CD8-positive, alpha-beta memory T cell (primary cell): ENCODE measurements at regions of chr17 and their contacts with region 1.

Region 1: DNA sequence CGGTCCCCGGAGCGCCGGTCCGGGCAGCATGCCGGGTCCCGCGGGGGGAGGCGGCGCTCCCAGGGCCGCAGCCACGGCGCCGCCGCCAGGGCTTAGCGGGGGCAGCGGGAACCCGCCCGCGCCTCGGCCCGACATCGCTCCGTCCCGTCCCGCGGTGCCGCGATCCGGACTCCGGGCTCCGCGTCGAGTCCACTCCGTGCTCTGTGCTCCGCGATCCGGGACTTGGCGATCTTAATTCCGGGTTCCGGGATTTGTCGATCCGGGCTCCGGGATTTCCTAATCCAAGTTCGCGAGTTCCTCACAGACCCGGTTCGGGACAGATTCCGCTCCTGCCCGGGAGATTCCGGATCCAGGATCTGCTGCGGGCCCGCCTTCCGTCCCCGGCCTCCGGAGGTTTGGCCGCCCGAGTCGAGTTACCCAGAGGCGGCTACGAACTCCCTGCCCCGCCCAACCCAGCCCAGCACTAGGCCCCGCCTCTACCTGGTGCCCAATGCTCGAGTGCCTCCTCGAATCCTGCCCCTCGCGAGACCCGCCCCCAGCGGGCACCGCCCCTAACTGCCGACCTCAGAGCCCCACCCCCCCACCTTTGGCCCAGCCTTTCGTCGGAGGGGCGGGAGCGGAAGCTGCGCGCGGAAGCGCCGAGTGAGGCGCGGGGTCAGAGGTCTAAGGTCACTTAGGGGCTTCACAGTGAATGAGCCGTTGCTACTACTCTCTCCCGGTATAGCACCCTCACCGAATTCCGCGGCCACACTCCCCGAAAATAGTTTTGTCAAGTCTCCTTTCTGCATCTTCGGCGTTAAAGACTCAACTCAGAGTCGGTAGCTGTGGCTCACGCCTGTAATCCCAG is at the start of gene SMARCD2:
- DNase-seq: peak; percentile 97 to 100 (median 98)
- H3K4me3 ChIP-seq: peak within 1 kb of the TSS; percentile 83
- H3K4me3 Mint-ChIP-seq: peak within 1 kb of the TSS; percentile 91 to 97 (median 94)
- H3K27ac ChIP-seq: peak within 1 kb of the TSS; percentile 88
- H3K27ac Mint-ChIP-seq: peak within 1 kb of the TSS; percentile 85 to 97 (median 94)
- H3K4me1 ChIP-seq: peaks cover 44% of the 10 kb centered on the region
- H3K4me1 Mint-ChIP-seq: peaks cover 36 to 47% (median 47%) of the 10 kb centered on the region in 3 donors
- H3K27me3 ChIP-seq: no peaks in the 10 kb centered on the region
- H3K27me3 Mint-ChIP-seq: no peaks in the 10 kb centered on the region
- total RNA-seq, gene SMARCD2: 96.8 to 107 TPM

Region 2: DNA sequence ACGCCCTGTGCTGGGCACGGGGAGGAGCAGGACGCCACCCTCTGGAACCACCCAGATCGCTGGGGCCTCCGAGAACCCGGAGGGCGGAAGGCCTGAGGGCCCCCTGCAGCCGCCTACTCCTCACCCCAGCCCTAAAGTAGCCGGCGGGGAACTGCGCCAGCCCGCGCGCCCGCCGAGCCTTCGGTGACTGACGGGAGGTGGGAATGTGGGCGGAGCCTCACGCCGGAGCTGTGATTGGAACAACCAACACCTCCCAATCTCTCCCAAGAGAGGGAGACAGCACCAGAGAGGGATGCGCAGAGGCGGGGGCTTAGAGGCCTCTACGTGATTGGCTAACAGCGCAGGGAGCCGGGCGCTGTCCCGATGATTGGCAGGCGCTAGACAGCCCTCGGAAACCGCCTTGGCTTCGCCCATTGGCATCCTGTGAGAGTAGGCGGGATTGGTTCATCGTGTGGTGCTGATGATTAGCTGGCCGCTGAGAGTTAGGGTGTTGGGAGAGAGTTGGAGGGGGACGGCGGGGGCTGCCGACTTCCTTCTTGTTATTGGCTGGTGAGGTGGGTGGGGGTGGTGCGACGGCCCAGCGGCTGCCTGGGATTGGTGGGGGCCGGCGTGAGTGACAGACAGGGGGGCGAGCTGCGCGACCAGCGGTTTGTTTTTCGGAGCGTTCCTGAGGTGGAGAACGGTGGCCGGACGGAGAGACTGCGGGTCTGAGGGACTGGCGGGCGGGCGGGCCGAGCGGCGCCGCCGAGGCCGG is 220.8 kb before region 1 on chr17 and contains the start of gene MAP3K3:
- CTCF ChIA-PET with region 1: no interaction called
- POLR2A ChIA-PET with region 1: interaction called, 12 read pairs
- DNase-seq: peak; percentile 94 to 98 (median 97)
- H3K4me3 ChIP-seq: peak within 1 kb of the TSS; percentile 70
- H3K4me3 Mint-ChIP-seq: peak within 1 kb of the TSS; percentile 95 to 99 (median 98)
- H3K27ac ChIP-seq: peak within 1 kb of the TSS; percentile 55
- H3K27ac Mint-ChIP-seq: peak within 1 kb of the TSS; percentile 71 to 95 (median 91)
- H3K4me1 ChIP-seq: peaks cover 36% of the 10 kb centered on the region
- H3K4me1 Mint-ChIP-seq: peaks cover 44 to 47% (median 46%) of the 10 kb centered on the region in 3 donors
- H3K27me3 ChIP-seq: no peaks in the 10 kb centered on the region
- H3K27me3 Mint-ChIP-seq: peaks cover 0 to 1% of the 10 kb centered on the region in 2 donors
- total RNA-seq, gene MAP3K3: 34.7 to 35.8 TPM

Region 3: GRCh38 chr17:63741221-63742049 is 101.3 kb before region 1 on chr17 and contains the start of gene STRADA:
- CTCF ChIA-PET with region 1: no interaction called
- POLR2A ChIA-PET with region 1: interaction called, 10 read pairs
- DNase-seq: peak; percentile 98 to 99 (median 98)
- H3K4me3 ChIP-seq: peak within 1 kb of the TSS; percentile 86
- H3K4me3 Mint-ChIP-seq: peak within 1 kb of the TSS; percentile 86 to 96 (median 90)
- H3K27ac ChIP-seq: peak within 1 kb of the TSS; percentile 92
- H3K27ac Mint-ChIP-seq: peak within 1 kb of the TSS; percentile 93 to 98 (median 94)
- H3K4me1 ChIP-seq: peaks cover 13% of the 10 kb centered on the region
- H3K4me1 Mint-ChIP-seq: peaks cover 17 to 25% (median 21%) of the 10 kb centered on the region in 3 donors
- H3K27me3 ChIP-seq: no peaks in the 10 kb centered on the region
- H3K27me3 Mint-ChIP-seq: peaks cover 0 to 2% of the 10 kb centered on the region in 2 donors
- total RNA-seq, gene STRADA: 56.7 to 57.2 TPM

Region 4: DNA sequence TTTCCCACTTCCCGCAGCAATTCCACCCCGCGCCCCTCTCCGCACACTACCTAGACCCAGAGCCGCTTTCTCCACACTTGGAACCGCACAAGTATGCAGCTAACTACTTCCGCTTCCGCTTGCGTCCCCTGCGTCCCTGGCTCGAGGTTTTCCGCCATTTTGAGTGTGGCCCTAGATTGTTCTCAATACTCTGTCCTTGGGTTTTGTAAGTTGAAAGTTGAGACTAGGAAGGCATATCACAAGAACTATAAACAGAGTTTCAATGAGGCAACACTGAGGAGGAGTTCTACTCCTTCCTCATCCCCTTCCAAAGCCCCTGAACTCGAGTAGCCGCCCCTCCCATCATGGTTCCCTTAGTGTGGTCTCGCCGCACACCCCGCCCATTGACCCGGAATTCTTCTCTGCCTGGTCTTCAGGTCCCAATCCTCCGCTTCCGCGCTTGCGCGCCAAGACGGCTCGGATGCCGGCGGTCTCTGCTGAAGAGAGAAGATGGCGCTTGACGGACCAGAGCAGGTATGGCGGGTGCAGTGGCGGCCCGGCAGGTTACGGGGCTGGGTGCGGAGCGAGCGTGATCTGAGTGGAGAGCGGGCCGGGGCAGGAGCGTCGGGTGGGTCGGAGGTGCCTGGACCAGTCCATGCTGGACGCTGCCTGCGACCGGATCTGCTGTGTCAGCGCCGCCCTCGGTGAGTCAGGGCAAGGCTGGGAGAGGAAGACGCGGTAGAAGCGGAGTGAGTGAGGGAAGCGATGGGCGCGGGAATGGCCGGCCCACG is 15.6 kb before region 1 on chr17 and contains the starts of genes FTSJ3 and PSMC5:
- CTCF ChIA-PET with region 1: interaction called, 48 read pairs
- POLR2A ChIA-PET with region 1: interaction called, 73 read pairs
- DNase-seq: peak; percentile 92 to 98 (median 95)
- H3K4me3 ChIP-seq: peak within 1 kb of the TSS; percentile 94
- H3K4me3 Mint-ChIP-seq: peak within 1 kb of the TSS; percentile 95 to 100 (median 97)
- H3K27ac ChIP-seq: peak within 1 kb of the TSS; percentile 78
- H3K27ac Mint-ChIP-seq: peak within 1 kb of the TSS; percentile 97 to 100 (median 99)
- H3K4me1 ChIP-seq: peaks cover 55% of the 10 kb centered on the region
- H3K4me1 Mint-ChIP-seq: peaks cover 68 to 89% (median 72%) of the 10 kb centered on the region in 3 donors
- H3K27me3 ChIP-seq: no peaks in the 10 kb centered on the region
- H3K27me3 Mint-ChIP-seq: peaks cover 0 to 2% of the 10 kb centered on the region in 2 donors
- total RNA-seq, gene FTSJ3: 98.1 to 102 TPM
- total RNA-seq, gene PSMC5: 208 to 212 TPM